ENCODE measurements at regions of chr10 and their contacts with region 1.

Region 1: GRCh38 chr10:80504158-80504811 is 33.4 kb upstream of the SH2D4B start:
- DNase-seq: peak; percentile 71 to 77 (median 71)
- H3K4me3 ChIP-seq: peak overlapping the region in 1 of 3 experiments; percentile 60
- H3K4me3 Mint-ChIP-seq: peak overlapping the region in 1 of 2 donors; percentile 83
- H3K27ac ChIP-seq: peak overlapping the region; percentile 92 to 95
- H3K27ac Mint-ChIP-seq: peak overlapping the region; percentile 90 to 99 (median 94)
- H3K4me1 ChIP-seq: peaks cover 66 to 67% of the 10 kb centered on the region in 2 donors
- H3K4me1 Mint-ChIP-seq: peaks cover 76% of the 10 kb centered on the region
- H3K27me3 ChIP-seq: no peaks in the 10 kb centered on the region
- H3K27me3 Mint-ChIP-seq: no peaks in the 10 kb centered on the region
- CTCF ChIP-seq: no peak

Region 2: GRCh38 chr10:80382989-80383388 is 121.3 kb before region 1 on chr10:
- intact Hi-C with region 1: loop called (anchors 2 to 5 kb)
- DNase-seq: peak; percentile 27 to 50 (median 45)
- H3K4me3 ChIP-seq: no peak overlapping the region
- H3K4me3 Mint-ChIP-seq: peak overlapping the region in 1 of 2 donors; percentile 1
- H3K27ac ChIP-seq: no peak overlapping the region
- H3K27ac Mint-ChIP-seq: peak overlapping the region in 1 of 7 donors; percentile 50
- H3K4me1 ChIP-seq: peaks cover 5 to 9% of the 10 kb centered on the region in 2 donors
- H3K4me1 Mint-ChIP-seq: peaks cover 20% of the 10 kb centered on the region
- H3K27me3 ChIP-seq: no peaks in the 10 kb centered on the region
- H3K27me3 Mint-ChIP-seq: peaks cover 2 to 4% (median 3%) of the 10 kb centered on the region in 3 donors
- CTCF ChIP-seq: peak; percentile 68

Region 3: DNA sequence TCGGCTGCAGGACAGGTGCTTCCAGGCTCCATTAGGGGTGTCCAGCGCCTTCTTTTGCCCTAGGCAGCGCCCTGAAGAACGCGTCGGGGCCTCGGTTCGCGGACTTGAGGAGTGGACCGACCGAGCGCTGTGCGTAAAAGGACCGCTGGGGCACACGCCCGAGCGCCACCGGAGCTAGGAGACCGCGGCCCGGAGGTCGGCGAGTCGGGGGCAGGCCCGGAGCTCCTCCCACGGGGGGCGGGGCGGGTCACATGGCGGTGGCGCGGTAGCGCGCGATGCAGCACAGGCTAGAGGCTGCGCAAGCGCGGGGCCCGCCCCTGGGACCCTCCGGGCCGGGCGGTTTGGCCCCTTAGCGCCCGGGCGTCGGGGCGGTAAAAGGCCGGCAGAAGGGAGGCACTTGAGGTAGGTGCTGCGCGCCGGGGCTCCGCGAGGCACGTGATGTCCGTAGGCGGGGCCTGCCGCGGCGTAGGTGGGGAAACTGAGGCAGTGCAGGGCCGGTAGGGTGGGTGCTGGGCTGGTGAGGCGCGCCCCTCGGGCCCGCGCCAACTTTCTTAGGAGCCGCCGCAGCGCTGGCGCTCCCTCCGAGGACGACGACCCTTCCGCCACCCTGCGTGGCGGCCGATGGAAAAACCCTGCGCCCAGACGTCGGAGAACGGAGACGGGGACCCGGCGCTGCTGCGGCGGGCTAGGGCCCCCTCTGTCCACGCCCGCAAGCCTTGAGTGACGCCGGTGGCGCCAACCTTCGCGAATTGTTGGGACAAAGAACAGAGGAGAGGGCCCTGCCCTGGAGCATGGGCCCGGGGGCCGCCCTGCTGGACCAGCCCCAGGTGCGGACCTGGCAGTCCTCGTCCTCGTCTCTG is 95.8 kb before region 1 on chr10 and contains the start of gene PRXL2A:
- intact Hi-C with region 1: no loop called
- DNase-seq: peak; percentile 32 to 44 (median 43)
- H3K4me3 ChIP-seq: peak within 1 kb of the TSS; percentile 47 to 87 (median 62)
- H3K4me3 Mint-ChIP-seq: peak within 1 kb of the TSS; percentile 85 to 96
- H3K27ac ChIP-seq: no peak within 1 kb of the TSS
- H3K27ac Mint-ChIP-seq: peak within 1 kb of the TSS in 2 of 7 donors; percentile 10 to 47
- H3K4me1 ChIP-seq: peaks cover 19 to 30% of the 10 kb centered on the region in 2 donors
- H3K4me1 Mint-ChIP-seq: peaks cover 22% of the 10 kb centered on the region
- H3K27me3 ChIP-seq: peaks cover 0 to 28% of the 10 kb centered on the region in 2 donors
- H3K27me3 Mint-ChIP-seq: peaks cover 32 to 35% (median 34%) of the 10 kb centered on the region in 3 donors
- CTCF ChIP-seq: no peak
- polyA plus RNA-seq, gene PRXL2A: 0.61 to 4.1 (median 3.4) TPM

Region 4: DNA sequence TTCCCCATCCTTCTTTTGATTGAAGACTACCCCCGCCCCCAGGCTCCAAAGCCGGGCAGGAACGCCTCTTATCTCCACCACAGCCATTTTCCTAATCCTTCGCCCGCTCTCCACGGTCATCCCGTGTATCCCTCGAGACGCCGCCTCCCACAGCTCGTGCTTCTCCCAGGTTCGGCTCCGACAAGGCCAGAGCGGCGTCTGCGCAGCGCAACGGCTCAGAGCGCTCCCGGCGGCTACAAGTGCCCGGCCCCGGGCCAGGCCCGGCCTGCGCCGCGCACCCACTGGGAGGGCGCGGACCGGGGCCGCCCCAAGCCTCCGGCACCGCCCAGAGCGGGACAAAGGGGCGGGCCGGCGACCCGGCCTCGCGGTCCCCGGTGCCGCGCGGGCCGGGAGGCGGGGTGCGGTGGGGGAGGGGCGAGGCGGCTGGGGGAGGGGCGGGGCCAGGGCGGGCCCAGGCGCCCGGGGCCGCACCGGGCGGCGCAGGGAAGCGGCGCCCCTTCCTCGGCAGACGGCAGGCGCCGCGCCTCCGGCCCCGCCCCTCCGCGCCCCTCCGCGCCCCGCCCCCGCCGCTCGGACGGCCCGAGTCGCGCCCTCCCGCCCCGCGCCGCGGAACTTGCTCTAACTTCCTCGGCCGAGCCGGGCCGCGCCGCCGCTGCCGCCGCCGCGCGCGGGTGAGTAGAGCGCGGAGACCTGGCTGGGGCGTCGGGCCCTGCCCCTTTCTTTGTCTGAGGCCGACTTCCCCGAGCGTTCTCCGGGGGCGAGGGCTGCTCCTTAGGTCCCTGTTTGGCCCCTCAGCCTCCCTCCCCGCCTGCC is 50.4 kb before region 1 on chr10 and contains the start of gene TSPAN14:
- intact Hi-C with region 1: loop called (anchors 2 to 5 kb)
- DNase-seq: peak; percentile 62 to 73 (median 72)
- H3K4me3 ChIP-seq: peak within 1 kb of the TSS; percentile 63 to 96 (median 74)
- H3K4me3 Mint-ChIP-seq: peak within 1 kb of the TSS; percentile 99
- H3K27ac ChIP-seq: peak within 1 kb of the TSS; percentile 81 to 92
- H3K27ac Mint-ChIP-seq: peak within 1 kb of the TSS; percentile 92 to 99 (median 94)
- H3K4me1 ChIP-seq: peaks cover 66 to 77% of the 10 kb centered on the region in 2 donors
- H3K4me1 Mint-ChIP-seq: peaks cover 49% of the 10 kb centered on the region
- H3K27me3 ChIP-seq: no peaks in the 10 kb centered on the region
- H3K27me3 Mint-ChIP-seq: peaks cover 0 to 2% (median 2%) of the 10 kb centered on the region in 3 donors
- CTCF ChIP-seq: no peak
- polyA plus RNA-seq, gene TSPAN14: 123 to 160 (median 146) TPM

Region 5: DNA sequence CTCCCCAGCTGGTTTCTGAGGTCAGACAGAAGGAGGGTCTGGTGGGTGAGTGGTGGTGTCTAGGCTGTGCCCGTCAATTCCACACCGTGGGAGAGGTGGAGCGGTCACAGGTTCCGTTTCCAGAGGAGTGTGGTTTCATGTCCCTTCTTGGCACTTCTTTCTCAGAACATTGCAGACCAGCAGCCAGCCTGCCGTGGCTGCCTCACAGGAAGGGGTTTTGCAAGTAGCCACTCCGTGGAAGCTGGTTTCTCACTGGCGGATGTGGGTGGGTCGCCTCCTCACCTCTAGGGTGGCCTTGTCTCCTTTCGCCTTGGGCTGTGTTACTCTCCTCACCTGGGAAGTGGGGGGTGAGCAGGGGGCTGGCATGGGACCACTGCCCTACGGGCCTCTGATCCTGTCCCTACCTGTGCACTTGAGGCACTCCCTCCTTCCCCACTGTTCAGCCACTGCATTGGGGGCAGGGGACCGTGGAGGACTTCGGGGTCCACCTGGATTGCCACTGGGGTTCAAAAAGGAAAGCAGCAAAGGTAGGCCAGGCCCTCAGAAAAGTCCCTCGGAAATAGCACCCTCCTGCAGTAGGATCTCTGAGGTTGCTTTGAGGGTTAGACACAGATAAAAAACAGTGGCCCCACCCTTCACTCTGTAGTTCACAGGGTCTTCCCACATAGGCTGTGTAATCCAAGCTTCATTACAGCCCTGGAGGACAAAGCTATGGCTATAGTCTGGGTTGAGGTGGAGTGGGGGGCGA is 16.3 kb before region 1 on chr10:
- intact Hi-C with region 1: loop called (anchors 2 kb)
- DNase-seq: peak; percentile 78 to 85 (median 82)
- H3K4me3 ChIP-seq: peak overlapping the region in 1 of 3 experiments; percentile 66
- H3K4me3 Mint-ChIP-seq: peak overlapping the region; percentile 56 to 80
- H3K27ac ChIP-seq: peak overlapping the region; percentile 84 to 90
- H3K27ac Mint-ChIP-seq: peak overlapping the region; percentile 91 to 98 (median 95)
- H3K4me1 ChIP-seq: peaks cover 100% of the 10 kb centered on the region in 2 donors
- H3K4me1 Mint-ChIP-seq: peaks cover 98% of the 10 kb centered on the region
- H3K27me3 ChIP-seq: no peaks in the 10 kb centered on the region
- H3K27me3 Mint-ChIP-seq: peaks cover 0 to 5% (median 0%) of the 10 kb centered on the region in 3 donors
- CTCF ChIP-seq: no peak

Region 6: GRCh38 chr10:81995254-81995653 is 1491.0 kb after region 1 on chr10:
- intact Hi-C with region 1: no loop called
- DNase-seq: no peak
- H3K4me3 ChIP-seq: no peak overlapping the region
- H3K4me3 Mint-ChIP-seq: no peak overlapping the region
- H3K27ac ChIP-seq: no peak overlapping the region
- H3K27ac Mint-ChIP-seq: no peak overlapping the region
- H3K4me1 ChIP-seq: no peaks in the 10 kb centered on the region
- H3K4me1 Mint-ChIP-seq: no peaks in the 10 kb centered on the region
- H3K27me3 ChIP-seq: no peaks in the 10 kb centered on the region
- H3K27me3 Mint-ChIP-seq: peaks cover 0 to 2% (median 0%) of the 10 kb centered on the region in 3 donors
- CTCF ChIP-seq: no peak